Heart left ventricle (tissue), 16 donors: ENCODE measurements at regions of chr7 and their contacts with region 1.

Region 1: DNA sequence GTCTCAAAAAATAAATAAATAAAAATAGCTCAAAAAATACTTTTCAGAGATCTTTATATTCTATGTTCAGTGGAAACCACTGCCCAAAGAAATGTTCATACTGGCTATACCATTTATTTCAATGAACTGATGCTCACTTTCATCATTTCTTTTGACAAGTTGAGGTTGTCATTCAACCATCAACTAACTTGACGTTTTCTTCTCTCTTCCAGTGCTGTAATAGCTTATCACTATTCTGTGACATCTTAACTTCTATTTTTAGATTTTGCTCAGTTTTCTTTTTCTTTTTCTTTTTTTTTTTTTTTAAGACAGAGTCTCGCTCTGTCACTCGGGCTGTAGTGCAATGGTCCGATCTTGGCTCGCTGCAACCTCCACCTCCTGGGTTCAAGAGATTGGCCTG is 8.7 kb upstream of the CTAGE4 start:
- DNase-seq: no peak
- ATAC-seq: no peak
- H3K4me3 ChIP-seq: no peak overlapping the region
- H3K27ac ChIP-seq: no peak overlapping the region
- H3K4me1 ChIP-seq: no peaks in the 10 kb centered on the region
- H3K27me3 ChIP-seq: no peaks in the 10 kb centered on the region
- CTCF ChIP-seq: no peak
- POLR2A ChIP-seq: no peak

Region 2: GRCh38 chr7:144110272-144110671 is 64.3 kb before region 1 on chr7:
- intact Hi-C with region 1: no loop called
- DNase-seq: no peak
- ATAC-seq: no peak
- H3K4me3 ChIP-seq: no peak overlapping the region
- H3K27ac ChIP-seq: no peak overlapping the region
- H3K4me1 ChIP-seq: no peaks in the 10 kb centered on the region
- H3K27me3 ChIP-seq: no peaks in the 10 kb centered on the region
- CTCF ChIP-seq: no peak
- POLR2A ChIP-seq: no peak

Region 3: DNA sequence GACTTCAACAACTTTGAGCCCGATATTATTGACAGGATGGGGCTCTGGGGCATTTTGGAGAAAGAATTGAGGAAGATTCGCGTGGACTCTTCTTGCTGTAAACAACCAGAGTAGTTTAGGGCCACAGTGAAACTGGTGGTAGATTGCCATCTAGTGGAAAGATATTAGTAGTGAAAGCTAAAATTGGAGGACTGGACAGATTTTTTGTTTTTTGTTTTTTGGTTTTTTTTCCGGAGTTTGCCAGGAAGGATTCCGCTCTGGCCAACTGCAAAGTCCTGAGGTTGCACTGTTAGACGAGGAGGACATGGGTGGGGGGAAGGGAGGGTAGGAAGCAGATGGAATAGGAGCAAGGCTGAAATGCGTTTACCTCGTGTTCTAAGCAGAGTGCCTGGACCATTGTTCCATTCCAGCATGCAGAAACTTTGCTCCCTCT is 217.2 kb after region 1 on chr7:
- intact Hi-C with region 1: loop called in 2 of 10 experiments (anchors 5 to 10 kb)
- DNase-seq: no peak
- ATAC-seq: peak; percentile 58 to 77 (median 70)
- H3K4me3 ChIP-seq: peak overlapping the region in 2 of 12 donors; percentile 16 to 30
- H3K27ac ChIP-seq: peak overlapping the region in 1 of 12 donors; percentile 71
- H3K4me1 ChIP-seq: peaks cover 0 to 14% (median 0%) of the 10 kb centered on the region in 12 donors
- H3K27me3 ChIP-seq: no peaks in the 10 kb centered on the region
- CTCF ChIP-seq: peak; percentile 59 to 79 (median 69)
- POLR2A ChIP-seq: no peak

Region 4: DNA sequence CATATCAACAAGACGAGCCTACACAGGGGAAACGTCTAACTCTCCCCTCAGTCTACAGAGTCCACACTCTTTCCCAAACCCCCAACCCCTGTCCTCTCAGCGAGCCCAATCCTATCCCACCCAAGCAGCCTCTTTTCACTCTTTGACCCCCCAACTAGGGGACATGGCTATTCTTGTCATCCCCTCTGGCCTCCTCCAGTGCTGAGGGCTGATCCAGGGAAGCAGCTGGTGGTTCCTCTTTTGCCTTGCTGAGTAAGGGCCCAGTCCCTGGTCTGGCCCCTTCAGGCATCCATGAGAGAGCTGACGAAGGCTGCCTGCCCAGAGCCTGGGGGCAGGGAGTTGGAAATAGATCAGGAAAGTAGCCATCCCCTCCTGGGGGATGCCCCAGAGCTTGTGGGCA is 222.5 kb after region 1 on chr7:
- intact Hi-C with region 1: loop called in 2 of 10 experiments (anchors 5 to 10 kb)
- DNase-seq: no peak
- ATAC-seq: no peak
- H3K4me3 ChIP-seq: no peak overlapping the region
- H3K27ac ChIP-seq: no peak overlapping the region
- H3K4me1 ChIP-seq: peaks cover 0 to under 1% (median 0%) of the 10 kb centered on the region in 12 donors
- H3K27me3 ChIP-seq: peaks cover 0 to 9% (median 0%) of the 10 kb centered on the region in 9 donors
- CTCF ChIP-seq: no peak
- POLR2A ChIP-seq: no peak

Region 5: DNA sequence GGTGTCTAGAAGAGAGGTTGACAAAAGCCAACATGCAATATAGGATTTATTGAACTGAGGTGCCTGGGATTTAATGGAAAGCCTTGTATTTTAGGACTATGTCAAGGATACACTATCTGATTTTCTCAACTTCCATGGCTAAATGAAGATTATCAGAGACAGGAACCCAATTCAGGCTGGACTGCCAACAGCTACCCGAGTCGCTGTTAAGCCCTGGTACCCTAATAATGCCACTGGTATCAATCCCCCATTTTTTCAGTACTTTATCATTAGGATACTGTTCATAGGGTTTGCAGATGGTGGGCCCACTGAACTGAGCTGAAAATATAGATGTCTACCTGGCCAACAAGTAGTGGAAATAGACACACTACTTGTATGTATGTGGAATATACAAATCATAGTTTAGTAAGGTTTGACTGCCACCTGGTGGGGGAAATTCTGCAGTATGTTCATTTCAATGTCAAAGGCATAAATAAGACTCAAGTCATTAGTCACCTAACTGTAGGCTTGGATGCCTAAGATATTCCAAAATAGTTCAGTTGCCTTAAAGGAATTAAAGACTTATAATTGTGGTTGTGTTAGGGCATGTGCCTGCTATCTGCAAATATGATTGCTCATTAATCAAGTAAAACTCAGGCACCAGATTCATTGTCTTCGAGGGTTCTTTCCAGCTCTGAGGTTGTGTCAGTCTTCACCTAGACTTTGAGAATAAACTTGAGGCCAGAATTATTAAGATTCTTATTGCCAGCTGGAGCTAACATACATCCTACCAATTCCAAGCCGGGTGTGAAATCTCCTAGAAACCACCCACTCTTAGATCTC is 263.0 kb after region 1 on chr7:
- intact Hi-C with region 1: loop called in 1 of 10 experiments (anchors 5 kb)
- DNase-seq: peak in 2 of 5 donors; percentile 27 to 30
- ATAC-seq: peak in 2 of 4 donors; percentile 47 to 49
- H3K4me3 ChIP-seq: no peak overlapping the region
- H3K27ac ChIP-seq: no peak overlapping the region
- H3K4me1 ChIP-seq: no peaks in the 10 kb centered on the region
- H3K27me3 ChIP-seq: peaks cover 0 to 4% (median 0%) of the 10 kb centered on the region in 9 donors
- CTCF ChIP-seq: peak; percentile 28 to 69 (median 52)
- POLR2A ChIP-seq: no peak

Region 6: DNA sequence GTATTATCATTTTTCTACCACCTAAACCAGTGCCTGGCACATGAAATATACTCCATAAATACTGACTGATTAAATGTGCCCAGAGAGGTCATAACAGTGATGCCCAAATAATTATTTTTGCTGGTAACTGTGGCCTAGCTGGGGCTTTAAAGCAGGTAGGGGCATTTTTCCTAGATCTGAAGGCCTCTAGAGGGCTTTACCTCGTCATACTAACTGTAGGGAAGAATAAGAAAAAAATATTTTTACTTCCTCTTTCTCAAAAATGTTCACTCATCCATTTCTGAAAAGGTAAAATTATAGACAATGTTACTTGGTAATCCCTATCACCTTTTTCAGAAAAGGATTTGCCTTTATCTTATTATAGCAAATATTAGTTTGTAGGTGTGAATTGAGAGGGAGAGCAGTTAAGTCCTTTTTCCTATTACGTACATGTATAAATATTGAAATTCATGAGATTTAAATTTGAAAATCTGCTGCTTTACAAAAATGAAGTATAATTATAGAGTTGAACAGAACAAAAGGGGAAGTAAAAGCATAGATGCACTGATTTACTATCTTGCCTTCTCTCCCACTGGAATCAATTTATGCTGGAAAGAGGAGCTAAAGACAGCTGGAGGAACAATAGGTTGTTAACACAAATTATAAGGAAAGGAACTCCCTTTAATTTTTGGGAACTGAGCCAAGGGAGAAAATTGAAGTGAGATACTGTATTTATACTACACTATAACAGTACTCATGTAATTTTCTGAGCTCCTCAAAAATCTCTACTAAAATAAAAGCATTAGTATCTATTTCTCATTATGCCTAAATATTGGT is 300.4 kb after region 1 on chr7:
- intact Hi-C with region 1: no loop called
- DNase-seq: no peak
- ATAC-seq: no peak
- H3K4me3 ChIP-seq: no peak overlapping the region
- H3K27ac ChIP-seq: no peak overlapping the region
- H3K4me1 ChIP-seq: peaks cover 0 to 4% (median 0%) of the 10 kb centered on the region in 12 donors
- H3K27me3 ChIP-seq: no peaks in the 10 kb centered on the region
- CTCF ChIP-seq: no peak
- POLR2A ChIP-seq: no peak